ENCODE measurements at regions of chr10 and their contacts with region 1.

Region 1: DNA sequence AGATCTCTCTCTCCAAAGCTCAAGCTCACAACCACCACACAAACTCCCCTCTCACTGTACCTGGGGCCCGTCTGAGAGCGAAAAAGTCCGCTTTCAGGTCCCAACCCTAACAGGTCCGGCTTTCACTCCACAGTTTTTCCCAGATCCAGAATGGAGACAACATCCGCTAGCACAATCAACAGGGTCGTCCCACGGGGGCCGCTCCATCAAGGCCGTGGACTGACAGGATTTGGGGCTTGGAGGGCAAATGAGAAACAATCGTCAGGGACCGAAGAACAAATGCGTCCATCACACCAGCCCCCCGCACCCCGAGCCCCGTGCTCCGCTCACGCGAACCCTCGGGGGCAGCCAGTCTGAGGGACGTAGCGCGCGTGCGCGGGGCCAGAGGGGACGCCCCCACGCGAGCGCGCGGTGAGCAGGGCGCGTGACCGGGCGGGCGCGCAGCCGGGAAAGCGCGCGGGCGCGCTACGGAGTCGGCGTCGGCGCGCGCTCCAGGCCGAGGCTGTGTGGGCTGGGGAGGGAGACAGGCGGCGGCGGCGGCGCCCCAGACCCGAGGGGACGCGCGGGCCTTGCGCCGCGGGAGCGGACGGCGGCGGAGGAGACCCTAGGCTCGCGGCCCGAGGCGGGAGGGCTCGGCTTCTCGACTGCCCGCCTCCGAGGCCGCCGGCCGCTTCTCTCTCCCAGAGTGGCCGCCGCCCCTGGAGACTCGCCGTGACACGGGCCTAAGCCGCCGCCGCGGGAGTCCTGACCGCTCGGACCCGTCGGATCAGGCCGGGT is at the start of gene SLK:
- DNase-seq: peak; percentile 79
- ATAC-seq: peak; percentile 90
- H3K4me3 ChIP-seq: peak within 1 kb of the TSS; percentile 93
- H3K27ac ChIP-seq: peak within 1 kb of the TSS; percentile 65
- H3K4me1 ChIP-seq: no peaks in the 10 kb centered on the region; the same call in 1 of the 2 replicates
- H3K27me3 ChIP-seq: no peaks in the 10 kb centered on the region
- CTCF ChIP-seq: no peak
- POLR2A ChIP-seq: peak; percentile 42; the same call in 1 of the 2 replicates
- RAD21 ChIP-seq: no peak
- total RNA-seq, gene SLK: 21.5 and 54.2 TPM in 2 replicates

Region 2: GRCh38 chr10:103894441-103894885 is 72.4 kb before region 1 on chr10:
- CTCF ChIA-PET with region 1: no interaction called
- POLR2A ChIA-PET with region 1: no interaction called
- dilution Hi-C with region 1: no loop called
- in situ Hi-C with region 1: no loop called
- intact Hi-C with region 1: loop called (anchors 1 kb)
- DNase-seq: peak; percentile 12
- ATAC-seq: peak; percentile 40
- H3K4me3 ChIP-seq: no peak overlapping the region
- H3K27ac ChIP-seq: peak overlapping the region; percentile 38; the same call in 1 of the 2 replicates
- H3K4me1 ChIP-seq: peaks cover 19% of the 10 kb centered on the region
- H3K27me3 ChIP-seq: no peaks in the 10 kb centered on the region
- CTCF ChIP-seq: no peak
- POLR2A ChIP-seq: no peak
- RAD21 ChIP-seq: no peak

Region 3: GRCh38 chr10:103918053-103918846 is 48.6 kb before region 1 on chr10 and contains the start of gene STN1:
- CTCF ChIA-PET with region 1: no interaction called
- POLR2A ChIA-PET with region 1: no interaction called
- dilution Hi-C with region 1: no loop called
- in situ Hi-C with region 1: no loop called
- intact Hi-C with region 1: loop called (anchors 5 kb)
- DNase-seq: peak; percentile 96
- ATAC-seq: peak; percentile 97
- H3K4me3 ChIP-seq: peak within 1 kb of the TSS; percentile 88
- H3K27ac ChIP-seq: peak within 1 kb of the TSS; percentile 96
- H3K4me1 ChIP-seq: peaks cover 6% of the 10 kb centered on the region
- H3K27me3 ChIP-seq: no peaks in the 10 kb centered on the region
- CTCF ChIP-seq: 0 out of 2 replicates have a peak, but pooled peaks have one; percentile 13
- POLR2A ChIP-seq: peak; percentile 85
- RAD21 ChIP-seq: no peak
- total RNA-seq, gene STN1: 28.6 and 32.3 TPM in 2 replicates

Region 4: GRCh38 chr10:103947799-103948516 is 18.9 kb before region 1 on chr10:
- CTCF ChIA-PET with region 1: no interaction called
- POLR2A ChIA-PET with region 1: no interaction called
- dilution Hi-C with region 1: no loop called
- in situ Hi-C with region 1: no loop called
- intact Hi-C with region 1: no loop called
- DNase-seq: no peak
- ATAC-seq: no peak
- H3K4me3 ChIP-seq: no peak overlapping the region
- H3K27ac ChIP-seq: no peak overlapping the region
- H3K4me1 ChIP-seq: no peaks in the 10 kb centered on the region
- H3K27me3 ChIP-seq: peaks cover 21% of the 10 kb centered on the region
- CTCF ChIP-seq: no peak
- POLR2A ChIP-seq: no peak
- RAD21 ChIP-seq: no peak

Region 5: DNA sequence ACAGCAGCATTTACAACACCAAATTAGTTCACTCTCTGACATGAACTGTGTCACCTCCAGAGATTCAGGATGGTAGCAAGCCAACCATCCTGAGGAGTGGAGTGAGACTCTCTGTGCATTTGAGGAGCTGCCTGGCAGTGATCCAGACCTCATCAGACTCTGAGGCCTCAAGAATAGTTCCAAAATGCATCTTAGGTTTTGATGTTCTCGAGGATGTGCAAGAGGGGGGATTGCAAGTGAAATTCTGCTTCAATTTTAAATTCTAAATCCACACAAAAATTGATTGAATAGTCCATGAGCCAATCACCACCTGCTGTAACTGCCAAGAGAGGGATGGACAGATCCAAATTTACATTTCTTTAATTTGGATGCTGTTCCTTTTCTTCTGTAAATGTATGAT is 49.8 kb after region 1 on chr10:
- CTCF ChIA-PET with region 1: no interaction called
- POLR2A ChIA-PET with region 1: no interaction called
- dilution Hi-C with region 1: no loop called
- in situ Hi-C with region 1: no loop called
- intact Hi-C with region 1: loop called (anchors 5 kb)
- DNase-seq: no peak
- ATAC-seq: no peak
- H3K4me3 ChIP-seq: no peak overlapping the region
- H3K27ac ChIP-seq: no peak overlapping the region
- H3K4me1 ChIP-seq: peaks cover 2% of the 10 kb centered on the region
- H3K27me3 ChIP-seq: no peaks in the 10 kb centered on the region
- CTCF ChIP-seq: no peak
- POLR2A ChIP-seq: no peak
- RAD21 ChIP-seq: no peak

Region 6: GRCh38 chr10:104029521-104029860 is 62.6 kb after region 1 on chr10:
- CTCF ChIA-PET with region 1: no interaction called
- POLR2A ChIA-PET with region 1: no interaction called
- dilution Hi-C with region 1: no loop called
- in situ Hi-C with region 1: no loop called
- intact Hi-C with region 1: no loop called
- DNase-seq: peak; percentile 63
- ATAC-seq: no peak
- H3K4me3 ChIP-seq: no peak overlapping the region
- H3K27ac ChIP-seq: no peak overlapping the region
- H3K4me1 ChIP-seq: no peaks in the 10 kb centered on the region
- H3K27me3 ChIP-seq: no peaks in the 10 kb centered on the region
- CTCF ChIP-seq: no peak
- POLR2A ChIP-seq: no peak
- RAD21 ChIP-seq: no peak

Region 7: GRCh38 chr10:104121520-104122224 is 154.8 kb after region 1 on chr10 and contains the start of gene SFR1:
- CTCF ChIA-PET with region 1: interaction called, 3 read pairs
- POLR2A ChIA-PET with region 1: no interaction called
- dilution Hi-C with region 1: no loop called
- in situ Hi-C with region 1: no loop called
- intact Hi-C with region 1: loop called (anchors 2 kb)
- DNase-seq: peak; percentile 97
- ATAC-seq: peak; percentile 98
- H3K4me3 ChIP-seq: peak within 1 kb of the TSS; percentile 85
- H3K27ac ChIP-seq: peak within 1 kb of the TSS; percentile 93
- H3K4me1 ChIP-seq: no peaks in the 10 kb centered on the region; the same call in 1 of the 2 replicates
- H3K27me3 ChIP-seq: no peaks in the 10 kb centered on the region
- CTCF ChIP-seq: peak; percentile 82
- POLR2A ChIP-seq: peak; percentile 93
- RAD21 ChIP-seq: peak; percentile 56
- total RNA-seq, gene SFR1: 1.6 and 5.6 TPM in 2 replicates

Region 8: GRCh38 chr10:104209575-104210198 is 242.8 kb after region 1 on chr10:
- CTCF ChIA-PET with region 1: no interaction called
- POLR2A ChIA-PET with region 1: no interaction called
- dilution Hi-C with region 1: no loop called
- in situ Hi-C with region 1: no loop called
- intact Hi-C with region 1: loop called (anchors 5 kb)
- DNase-seq: peak; percentile 39
- ATAC-seq: peak; percentile 79
- H3K4me3 ChIP-seq: no peak overlapping the region
- H3K27ac ChIP-seq: no peak overlapping the region
- H3K4me1 ChIP-seq: no peaks in the 10 kb centered on the region
- H3K27me3 ChIP-seq: peaks cover 29% of the 10 kb centered on the region
- CTCF ChIP-seq: peak; percentile 64
- POLR2A ChIP-seq: no peak
- RAD21 ChIP-seq: peak; percentile 68

Measured in IMR-90 (cell line).